Naive thymus-derived CD4-positive, alpha-beta T cell (primary cell): ENCODE measurements at regions of chr2 and their contacts with region 1.

Region 1: DNA sequence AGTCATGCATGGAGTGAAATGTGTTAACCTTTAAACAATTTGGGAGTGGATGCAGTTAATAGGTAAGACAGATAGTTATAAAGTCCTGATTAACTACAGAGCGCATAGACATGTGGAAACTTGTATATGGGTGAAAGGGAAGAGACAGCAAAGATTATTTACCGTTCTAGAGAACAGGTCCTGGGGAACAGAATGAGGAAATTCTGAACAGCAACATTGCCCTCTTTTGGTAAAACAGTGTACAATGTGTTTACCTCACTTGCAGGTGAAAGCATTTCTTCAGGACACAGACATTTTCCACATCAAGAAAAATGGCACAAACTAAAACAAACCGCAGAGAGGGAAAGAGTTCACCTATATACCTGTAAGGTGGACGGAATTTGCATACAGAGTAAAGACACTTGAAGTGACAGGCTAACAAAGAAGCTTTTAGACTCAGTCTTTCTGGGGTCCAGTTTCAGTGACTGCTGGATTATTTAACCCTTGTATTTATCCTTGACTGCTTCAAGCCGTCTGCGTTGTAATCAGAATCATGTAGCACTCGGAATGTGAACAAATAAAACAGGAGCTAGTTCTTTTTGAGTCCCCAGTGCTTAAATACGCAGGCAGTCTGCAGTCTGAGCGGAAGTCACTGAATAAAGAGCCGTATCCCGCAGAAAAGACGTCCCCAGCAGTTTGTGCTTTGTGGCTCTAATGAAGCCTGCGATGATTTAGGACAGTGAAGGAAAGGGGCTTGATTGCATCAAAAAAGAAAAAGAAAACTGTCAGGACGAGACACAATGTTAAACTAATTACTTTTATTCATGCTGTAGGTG is 364.8 kb upstream of the GALNT5 start:
- DNase-seq: peak in 2 of 9 donors; percentile 1 to 8
- ATAC-seq: peak; percentile 40
- H3K4me3 ChIP-seq: no peak overlapping the region
- H3K4me3 Mint-ChIP-seq: peak overlapping the region in 6 of 10 donors; percentile 1 to 36 (median 22)
- H3K27ac ChIP-seq: no peak overlapping the region
- H3K27ac Mint-ChIP-seq: no peak overlapping the region
- H3K4me1 ChIP-seq: no peaks in the 10 kb centered on the region
- H3K4me1 Mint-ChIP-seq: peaks cover 5 to 32% (median 10%) of the 10 kb centered on the region in 7 donors
- H3K27me3 ChIP-seq: peaks cover 0 to 6% of the 10 kb centered on the region in 2 donors
- H3K27me3 Mint-ChIP-seq: peaks cover 36 to 67% (median 45%) of the 10 kb centered on the region in 5 donors

Region 2: GRCh38 chr2:155368934-155369333 is 1523.7 kb before region 1 on chr2:
- CTCF ChIA-PET with region 1: no interaction called
- POLR2A ChIA-PET with region 1: no interaction called
- intact Hi-C with region 1: loop called in 1 of 2 experiments (anchors 2 kb)
- DNase-seq: peak in 2 of 9 donors; percentile 5 to 6
- ATAC-seq: no peak
- H3K4me3 ChIP-seq: no peak overlapping the region
- H3K4me3 Mint-ChIP-seq: no peak overlapping the region
- H3K27ac ChIP-seq: no peak overlapping the region
- H3K27ac Mint-ChIP-seq: no peak overlapping the region
- H3K4me1 ChIP-seq: no peaks in the 10 kb centered on the region
- H3K4me1 Mint-ChIP-seq: no peaks in the 10 kb centered on the region
- H3K27me3 ChIP-seq: no peaks in the 10 kb centered on the region
- H3K27me3 Mint-ChIP-seq: peaks cover 1 to 8% (median 6%) of the 10 kb centered on the region in 5 donors

Region 3: DNA sequence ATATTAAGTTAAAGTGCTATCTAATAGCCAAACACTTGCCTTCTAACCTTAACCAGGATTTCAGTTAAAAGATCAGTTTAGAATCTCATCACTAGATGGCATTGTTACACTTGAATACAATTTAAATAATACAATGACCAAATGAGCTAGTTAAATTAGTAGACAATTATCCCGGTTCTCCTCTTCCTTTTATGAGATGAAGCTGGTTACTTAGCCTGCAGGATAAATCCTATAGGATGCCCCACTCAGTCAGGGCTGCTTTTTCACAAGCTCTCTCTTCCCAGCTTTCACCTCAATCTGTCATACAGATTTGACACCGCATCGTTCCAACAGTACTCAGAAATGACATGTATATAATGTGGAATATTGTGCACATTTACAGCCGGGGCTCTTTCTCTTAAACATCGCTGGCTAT is 1515.4 kb before region 1 on chr2:
- CTCF ChIA-PET with region 1: no interaction called
- POLR2A ChIA-PET with region 1: no interaction called
- intact Hi-C with region 1: loop called in 1 of 2 experiments (anchors 1 kb)
- DNase-seq: no peak
- ATAC-seq: no peak
- H3K4me3 ChIP-seq: no peak overlapping the region
- H3K4me3 Mint-ChIP-seq: no peak overlapping the region
- H3K27ac ChIP-seq: no peak overlapping the region
- H3K27ac Mint-ChIP-seq: no peak overlapping the region
- H3K4me1 ChIP-seq: no peaks in the 10 kb centered on the region
- H3K4me1 Mint-ChIP-seq: peaks cover 0 to 4% (median 0%) of the 10 kb centered on the region in 7 donors
- H3K27me3 ChIP-seq: peaks cover 0 to 3% of the 10 kb centered on the region in 2 donors
- H3K27me3 Mint-ChIP-seq: peaks cover 0 to 8% (median 6%) of the 10 kb centered on the region in 5 donors

Region 4: DNA sequence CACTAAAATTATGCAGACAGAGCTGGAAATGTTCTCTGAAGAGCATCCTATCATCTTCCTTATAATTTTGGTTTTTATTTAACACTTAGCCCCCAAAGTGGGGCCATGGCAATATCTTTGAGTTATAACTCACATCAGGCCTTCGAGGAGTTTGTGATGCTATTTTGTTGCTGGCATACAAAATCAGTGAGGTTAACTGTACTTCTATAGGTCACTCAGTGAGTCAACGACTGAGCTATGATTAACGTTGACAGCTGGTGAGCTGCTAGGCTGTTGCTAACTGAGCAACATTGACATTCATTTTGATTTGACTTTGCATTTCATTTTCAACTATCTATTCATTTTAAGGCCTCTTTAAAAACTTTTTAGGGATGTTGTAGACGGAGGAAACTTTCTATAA is 406.5 kb before region 1 on chr2:
- CTCF ChIA-PET with region 1: no interaction called
- POLR2A ChIA-PET with region 1: no interaction called
- intact Hi-C with region 1: loop called in 1 of 2 experiments (anchors 10 kb)
- DNase-seq: no peak
- ATAC-seq: no peak
- H3K4me3 ChIP-seq: no peak overlapping the region
- H3K4me3 Mint-ChIP-seq: no peak overlapping the region
- H3K27ac ChIP-seq: no peak overlapping the region
- H3K27ac Mint-ChIP-seq: no peak overlapping the region
- H3K4me1 ChIP-seq: no peaks in the 10 kb centered on the region
- H3K4me1 Mint-ChIP-seq: peaks cover 14 to 35% (median 25%) of the 10 kb centered on the region in 7 donors
- H3K27me3 ChIP-seq: no peaks in the 10 kb centered on the region
- H3K27me3 Mint-ChIP-seq: no peaks in the 10 kb centered on the region

Region 5: GRCh38 chr2:156803248-156803647 is 89.4 kb before region 1 on chr2:
- CTCF ChIA-PET with region 1: no interaction called
- POLR2A ChIA-PET with region 1: no interaction called
- intact Hi-C with region 1: no loop called
- DNase-seq: no peak
- ATAC-seq: no peak
- H3K4me3 ChIP-seq: no peak overlapping the region
- H3K4me3 Mint-ChIP-seq: no peak overlapping the region
- H3K27ac ChIP-seq: no peak overlapping the region
- H3K27ac Mint-ChIP-seq: no peak overlapping the region
- H3K4me1 ChIP-seq: no peaks in the 10 kb centered on the region
- H3K4me1 Mint-ChIP-seq: peaks cover 0 to 3% (median 0%) of the 10 kb centered on the region in 7 donors
- H3K27me3 ChIP-seq: no peaks in the 10 kb centered on the region
- H3K27me3 Mint-ChIP-seq: peaks cover 0 to 14% (median 0%) of the 10 kb centered on the region in 5 donors

Region 6: GRCh38 chr2:157194097-157194688 is 301.5 kb after region 1 on chr2:
- CTCF ChIA-PET with region 1: no interaction called
- POLR2A ChIA-PET with region 1: no interaction called
- intact Hi-C with region 1: loop called in 1 of 2 experiments (anchors 5 kb)
- DNase-seq: peak in 5 of 9 donors; percentile 6 to 26 (median 15)
- ATAC-seq: peak; percentile 58
- H3K4me3 ChIP-seq: no peak overlapping the region
- H3K4me3 Mint-ChIP-seq: no peak overlapping the region
- H3K27ac ChIP-seq: no peak overlapping the region
- H3K27ac Mint-ChIP-seq: no peak overlapping the region
- H3K4me1 ChIP-seq: no peaks in the 10 kb centered on the region
- H3K4me1 Mint-ChIP-seq: peaks cover 0 to 6% (median 1%) of the 10 kb centered on the region in 7 donors
- H3K27me3 ChIP-seq: no peaks in the 10 kb centered on the region
- H3K27me3 Mint-ChIP-seq: peaks cover 0 to 10% (median 5%) of the 10 kb centered on the region in 5 donors